ENCODE measurements at regions of chr19 and their contacts with region 1.

Region 1: GRCh38 chr19:35013031-35013819 is 13.1 kb downstream of the GRAMD1A start:
- DNase-seq: peak; percentile 65 to 78 (median 74)
- ATAC-seq: peak; percentile 89
- H3K4me3 ChIP-seq: no peak overlapping the region
- H3K27ac ChIP-seq: no peak overlapping the region
- H3K4me1 ChIP-seq: peaks cover 0 to 28% of the 10 kb centered on the region in 2 experiments; a peak in 2 of 5 replicates
- H3K27me3 ChIP-seq: no peaks in the 10 kb centered on the region
- CTCF ChIP-seq: peak; percentile 86 to 93 (median 89)
- EP300 ChIP-seq: no peak
- POLR2A ChIP-seq: 0 out of 2 replicates have a peak, but pooled peaks have one; percentile 37
- RAD21 ChIP-seq: peak; percentile 76 to 89

Region 2: DNA sequence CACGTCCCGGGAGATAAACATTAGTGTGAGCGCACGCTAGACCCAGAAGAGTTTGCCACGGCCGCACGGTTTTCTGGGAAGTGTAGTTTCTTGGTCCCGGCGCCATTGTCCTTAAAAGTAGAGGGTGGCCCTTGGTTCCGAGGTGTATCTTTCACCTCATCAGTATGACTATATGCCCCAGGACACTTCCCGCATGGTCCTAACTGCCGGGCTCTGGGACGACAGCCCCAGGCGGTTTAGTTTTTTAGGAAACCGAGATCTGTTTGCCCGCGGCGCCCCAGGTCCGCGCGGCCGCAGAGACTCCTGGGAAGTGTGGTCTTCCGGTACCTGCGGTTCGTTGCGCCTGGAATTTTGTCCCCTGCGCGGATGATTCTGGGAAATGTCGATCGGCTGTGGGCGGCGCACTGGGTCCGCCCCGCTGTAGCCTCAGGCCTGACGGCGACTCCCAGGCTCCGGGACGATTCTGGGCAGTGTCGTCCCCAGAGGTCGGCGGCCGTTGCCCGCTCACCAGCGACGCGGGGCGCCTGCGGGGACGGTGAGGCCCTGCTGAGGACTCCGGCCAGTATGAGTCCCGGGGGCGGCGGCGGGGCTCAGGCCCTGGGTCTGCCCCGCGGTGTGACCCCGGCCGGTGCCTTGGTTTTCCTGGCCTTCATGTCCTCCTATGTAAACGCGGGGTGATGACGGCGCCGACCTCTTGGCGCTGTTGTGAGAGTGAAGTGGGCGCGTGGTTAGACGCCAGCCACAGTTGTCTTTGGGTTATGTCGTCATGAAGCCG is 279.2 kb before region 1 on chr19 and contains the start of gene ZNF181:
- CTCF ChIA-PET with region 1: interaction called, 3 read pairs
- POLR2A ChIA-PET with region 1: no interaction called
- in situ Hi-C with region 1: no loop called
- intact Hi-C with region 1: loop called (anchors 2 kb)
- DNase-seq: peak; percentile 86 to 94 (median 90)
- ATAC-seq: peak; percentile 92
- H3K4me3 ChIP-seq: peak within 1 kb of the TSS; percentile 52
- H3K27ac ChIP-seq: peak within 1 kb of the TSS; percentile 93
- H3K4me1 ChIP-seq: peaks cover 30 to 35% of the 10 kb centered on the region in 2 experiments
- H3K27me3 ChIP-seq: no peaks in the 10 kb centered on the region
- CTCF ChIP-seq: peak in 1 of 3 experiments; percentile 8; a peak in 1 of 6 replicates
- EP300 ChIP-seq: no peak
- POLR2A ChIP-seq: peak; percentile 95
- RAD21 ChIP-seq: no peak
- polyA plus RNA-seq, gene ZNF181: 4.3 to 6.9 TPM

Region 3: DNA sequence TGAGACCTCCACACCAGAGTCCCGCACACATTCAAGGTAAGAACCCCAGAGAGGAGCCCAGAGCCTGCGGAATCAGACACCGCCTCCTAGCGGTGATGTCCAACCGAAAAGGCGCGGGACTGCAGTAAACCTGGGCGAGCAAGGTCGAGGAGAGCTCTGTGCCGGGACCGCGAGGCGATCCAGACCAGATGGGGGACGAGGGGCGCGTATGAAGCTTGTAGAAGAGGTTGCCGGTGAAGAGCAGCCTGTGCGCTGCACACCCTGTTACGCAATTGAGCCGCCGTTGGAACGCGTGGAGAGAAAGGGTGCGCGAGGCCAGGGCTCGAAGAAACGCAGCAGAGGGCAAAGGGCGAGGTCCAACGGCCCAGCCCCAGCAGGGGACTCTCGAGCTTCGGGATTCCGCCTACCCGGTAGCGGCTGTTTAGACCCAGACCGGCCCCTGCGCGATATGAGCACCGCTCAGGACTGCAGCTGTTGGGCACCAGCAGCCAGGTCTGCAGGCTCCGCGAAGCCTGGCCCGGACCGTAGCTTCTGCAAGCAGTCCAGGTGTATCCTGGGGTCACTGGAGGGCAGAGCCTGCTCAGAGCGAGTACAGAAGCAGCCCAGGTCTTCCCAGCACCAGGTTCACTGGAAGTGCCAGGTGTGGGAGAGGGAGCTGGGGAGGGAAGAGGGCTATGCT is 174.3 kb before region 1 on chr19:
- CTCF ChIA-PET with region 1: interaction called, 3 read pairs
- POLR2A ChIA-PET with region 1: no interaction called
- in situ Hi-C with region 1: loop called (anchors 5 kb)
- intact Hi-C with region 1: loop called (anchors 1 kb)
- DNase-seq: no peak
- ATAC-seq: peak; percentile 53; the same call in 2 of the 3 replicates
- H3K4me3 ChIP-seq: no peak overlapping the region
- H3K27ac ChIP-seq: no peak overlapping the region
- H3K4me1 ChIP-seq: peaks cover 8 to 10% of the 10 kb centered on the region in 2 experiments; a peak in 4 of 5 replicates
- H3K27me3 ChIP-seq: no peaks in the 10 kb centered on the region; a peak in 2 of 5 replicates
- CTCF ChIP-seq: no peak
- EP300 ChIP-seq: no peak
- POLR2A ChIP-seq: no peak
- RAD21 ChIP-seq: no peak

Region 4: GRCh38 chr19:35027851-35028599 is 14.8 kb after region 1 on chr19:
- CTCF ChIA-PET with region 1: no interaction called
- POLR2A ChIA-PET with region 1: interaction called, 18 read pairs
- in situ Hi-C with region 1: no loop called
- intact Hi-C with region 1: no loop called
- DNase-seq: no peak
- ATAC-seq: no peak; the same call in 2 of the 3 replicates
- H3K4me3 ChIP-seq: no peak overlapping the region
- H3K27ac ChIP-seq: no peak overlapping the region
- H3K4me1 ChIP-seq: peaks cover 0 to 22% of the 10 kb centered on the region in 2 experiments; a peak in 4 of 5 replicates
- H3K27me3 ChIP-seq: peaks cover 2 to 10% of the 10 kb centered on the region in 2 experiments; a peak in 1 of 5 replicates
- CTCF ChIP-seq: no peak
- EP300 ChIP-seq: no peak
- POLR2A ChIP-seq: no peak
- RAD21 ChIP-seq: no peak